ENCODE measurements at regions of chr20 and their contacts with region 1.

Region 1: GRCh38 chr20:2729251-2729713 is 36.7 kb downstream of the EBF4 start:
- DNase-seq: no peak
- ATAC-seq: no peak
- H3K4me3 ChIP-seq: no peak overlapping the region
- H3K27ac ChIP-seq: no peak overlapping the region
- H3K4me1 ChIP-seq: no peaks in the 10 kb centered on the region
- CTCF ChIP-seq: no peak
- EP300 ChIP-seq: no peak
- POLR2A ChIP-seq: no peak
- RAD21 ChIP-seq: no peak

Region 2: DNA sequence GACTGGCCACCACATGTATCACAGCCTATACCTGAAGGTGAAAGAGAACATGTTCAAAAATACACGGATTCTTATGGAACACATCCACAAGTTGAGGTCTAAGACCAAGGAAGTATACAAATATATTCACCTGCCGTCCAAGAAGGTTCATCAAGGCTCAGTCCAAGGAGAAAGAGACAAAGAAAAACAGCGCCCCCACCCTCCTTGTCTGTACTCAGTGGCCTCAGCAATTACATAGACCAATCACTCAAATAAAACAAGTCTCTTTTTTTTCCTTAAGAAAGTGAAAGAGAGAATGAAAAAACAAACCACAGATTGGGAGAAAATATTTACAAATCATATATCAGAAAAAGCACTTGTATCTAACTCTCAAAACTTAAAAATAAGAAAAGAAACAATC is 51.7 kb after region 1 on chr20:
- CTCF ChIA-PET with region 1: no interaction called
- POLR2A ChIA-PET with region 1: interaction called, 11 read pairs
- DNase-seq: no peak
- ATAC-seq: peak; percentile 46 to 67; a peak in 3 of 6 replicates
- H3K4me3 ChIP-seq: no peak overlapping the region
- H3K27ac ChIP-seq: no peak overlapping the region
- H3K4me1 ChIP-seq: 0 out of 3 replicates have a peak, but pooled peaks cover 3% of the 10 kb centered on the region
- CTCF ChIP-seq: peak; percentile 33; the same call in 2 of the 3 replicates
- EP300 ChIP-seq: no peak
- POLR2A ChIP-seq: no peak
- RAD21 ChIP-seq: no peak